ENCODE measurements at regions of chr16 and their contacts with region 1.

Region 1: DNA sequence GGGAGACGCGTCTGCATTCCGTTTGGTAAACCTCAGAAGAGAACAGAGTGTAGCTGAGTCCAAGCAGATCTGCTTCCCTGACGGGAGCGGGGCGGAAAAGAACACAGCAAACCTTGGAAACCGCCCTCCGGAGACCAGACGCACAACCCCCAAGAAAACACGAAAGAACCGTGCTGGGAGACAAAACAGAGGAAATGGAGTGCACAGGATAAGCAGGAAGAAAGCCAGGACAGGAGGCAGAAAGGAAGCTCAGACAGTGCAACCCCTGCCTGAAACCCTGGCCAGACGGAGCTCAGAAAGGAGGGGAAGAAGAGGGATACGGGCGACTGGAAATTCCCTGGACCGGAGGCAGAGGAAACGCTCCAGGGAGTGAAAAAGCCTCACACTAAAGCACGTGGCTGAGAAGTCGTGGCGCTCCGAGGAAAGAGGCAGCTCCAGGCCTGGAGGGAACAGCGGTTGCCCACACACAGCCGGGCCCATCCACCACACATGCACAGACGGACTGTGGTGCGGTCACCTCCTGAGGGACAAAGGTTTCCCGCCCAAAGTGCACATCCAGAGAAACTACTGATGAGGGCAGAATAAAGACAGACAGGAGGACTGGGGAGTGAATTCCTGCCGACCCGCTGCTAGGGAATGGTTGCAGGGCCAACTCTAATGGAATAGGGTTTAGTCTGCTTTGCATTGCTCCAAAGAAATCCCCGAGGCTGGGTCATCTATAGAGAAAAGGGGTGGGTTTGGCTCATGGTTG is 10.2 kb downstream of the DPEP1 start:
- DNase-seq: no peak
- ATAC-seq: no peak
- H3K4me3 ChIP-seq: no peak overlapping the region
- H3K4me3 Mint-ChIP-seq: no peak overlapping the region
- H3K27ac ChIP-seq: no peak overlapping the region
- H3K27ac Mint-ChIP-seq: no peak overlapping the region
- H3K4me1 ChIP-seq: no peaks in the 10 kb centered on the region
- H3K4me1 Mint-ChIP-seq: no peaks in the 10 kb centered on the region
- H3K27me3 ChIP-seq: no peaks in the 10 kb centered on the region
- H3K27me3 Mint-ChIP-seq: peaks cover 6% of the 10 kb centered on the region
- CTCF ChIP-seq: no peak

Region 2: DNA sequence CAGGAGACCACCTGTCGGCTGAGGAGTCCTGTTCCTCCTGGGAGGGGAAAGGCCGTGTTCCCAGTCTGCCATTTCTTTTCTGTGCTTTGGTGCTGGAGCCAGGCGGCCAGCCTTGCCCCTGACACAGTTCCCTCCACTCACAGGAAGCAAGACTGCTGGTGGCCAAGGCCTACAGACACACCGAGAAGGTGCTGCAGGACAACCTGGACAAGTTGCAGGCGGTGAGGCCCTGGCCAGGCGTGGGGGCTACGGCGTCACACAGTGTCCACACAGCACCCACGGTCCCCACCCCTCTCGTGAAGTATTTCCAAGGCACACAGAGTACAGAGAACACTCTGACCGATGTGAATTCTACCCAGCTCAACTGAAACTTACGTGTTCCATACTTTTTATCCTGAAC is 69.3 kb before region 1 on chr16:
- CTCF ChIA-PET with region 1: no interaction called
- POLR2A ChIA-PET with region 1: interaction called, 10 read pairs
- intact Hi-C with region 1: no loop called
- DNase-seq: no peak
- ATAC-seq: no peak
- H3K4me3 ChIP-seq: no peak overlapping the region
- H3K4me3 Mint-ChIP-seq: no peak overlapping the region
- H3K27ac ChIP-seq: no peak overlapping the region
- H3K27ac Mint-ChIP-seq: no peak overlapping the region
- H3K4me1 ChIP-seq: peaks cover 0 to 1% of the 10 kb centered on the region in 2 donors
- H3K4me1 Mint-ChIP-seq: peaks cover 3% of the 10 kb centered on the region
- H3K27me3 ChIP-seq: no peaks in the 10 kb centered on the region
- H3K27me3 Mint-ChIP-seq: no peaks in the 10 kb centered on the region
- CTCF ChIP-seq: no peak

Region 3: GRCh38 chr16:89805136-89805905 is 181.6 kb after region 1 on chr16:
- CTCF ChIA-PET with region 1: no interaction called
- POLR2A ChIA-PET with region 1: interaction called, 10 read pairs
- intact Hi-C with region 1: no loop called
- DNase-seq: no peak
- ATAC-seq: no peak
- H3K4me3 ChIP-seq: no peak overlapping the region
- H3K4me3 Mint-ChIP-seq: no peak overlapping the region
- H3K27ac ChIP-seq: no peak overlapping the region
- H3K27ac Mint-ChIP-seq: no peak overlapping the region
- H3K4me1 ChIP-seq: no peaks in the 10 kb centered on the region
- H3K4me1 Mint-ChIP-seq: no peaks in the 10 kb centered on the region
- H3K27me3 ChIP-seq: no peaks in the 10 kb centered on the region
- H3K27me3 Mint-ChIP-seq: no peaks in the 10 kb centered on the region
- CTCF ChIP-seq: no peak

Measured in B cell (primary cell).